H1 (cell line): ENCODE measurements at regions of chr11 and their contacts with region 1.

Region 1: GRCh38 chr11:34869426-34869825 is 46.8 kb downstream of the APIP start:
- DNase-seq: peak in 1 of 2 experiments; percentile 51
- H3K4me3 ChIP-seq: no peak overlapping the region
- H3K27ac ChIP-seq: no peak overlapping the region
- H3K4me1 ChIP-seq: no peaks in the 10 kb centered on the region
- H3K27me3 ChIP-seq: no peaks in the 10 kb centered on the region
- CTCF ChIP-seq: peak; percentile 35 to 73 (median 44)
- EP300 ChIP-seq: no peak
- POLR2A ChIP-seq: no peak
- RAD21 ChIP-seq: peak; percentile 35 to 50

Region 2: DNA sequence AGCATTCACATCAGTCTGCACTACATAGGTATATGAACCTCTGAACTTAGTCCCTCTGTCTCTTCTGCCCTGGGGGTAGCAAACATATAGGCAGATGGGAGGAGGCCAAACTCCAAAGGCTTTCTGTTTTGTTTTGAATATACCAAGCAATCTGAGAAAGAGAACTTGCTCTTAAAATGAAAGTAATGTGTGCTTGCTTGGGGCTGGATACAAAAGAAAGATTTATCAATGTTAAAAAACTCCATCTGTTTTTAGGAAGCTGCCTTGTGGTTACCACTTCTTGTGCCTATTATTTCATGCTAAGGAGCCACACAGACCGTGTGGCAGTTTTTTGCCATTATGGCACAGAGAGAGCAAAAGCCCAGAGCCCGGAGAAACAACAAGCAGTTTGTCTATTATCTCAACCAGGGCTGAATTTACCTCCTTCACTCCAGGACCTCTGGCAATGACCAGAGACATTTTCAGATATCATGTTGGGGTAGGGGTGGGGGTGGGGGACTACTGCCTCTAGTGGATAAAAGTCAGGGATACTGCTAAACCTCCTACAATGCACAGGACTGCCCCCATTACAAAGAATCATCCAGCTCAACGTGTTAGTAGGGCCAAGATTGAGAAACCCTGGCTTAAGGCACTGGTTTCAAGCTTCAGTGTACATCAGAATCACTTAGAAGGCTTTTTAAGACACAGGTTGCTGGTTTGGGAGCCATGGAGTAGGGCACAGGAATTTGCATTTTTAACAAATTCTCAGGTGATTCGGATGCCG is 77.5 kb before region 1 on chr11:
- CTCF ChIA-PET with region 1: interaction called, 10 read pairs
- POLR2A ChIA-PET with region 1: no interaction called
- DNase-seq: no peak
- H3K4me3 ChIP-seq: no peak overlapping the region
- H3K27ac ChIP-seq: no peak overlapping the region
- H3K4me1 ChIP-seq: peaks cover 0 to 5% (median 3%) of the 10 kb centered on the region in 4 experiments; a peak in 2 of 7 replicates
- H3K27me3 ChIP-seq: no peaks in the 10 kb centered on the region
- CTCF ChIP-seq: peak in 2 of 3 experiments; percentile 4 to 21; a peak in 1 of 4 replicates
- EP300 ChIP-seq: no peak
- POLR2A ChIP-seq: no peak
- RAD21 ChIP-seq: peak in 1 of 2 experiments; percentile 1; a peak in 1 of 4 replicates

Region 3: GRCh38 chr11:34846467-34846866 is 23.0 kb before region 1 on chr11:
- CTCF ChIA-PET with region 1: interaction called, 19 read pairs
- POLR2A ChIA-PET with region 1: no interaction called
- DNase-seq: no peak
- H3K4me3 ChIP-seq: no peak overlapping the region
- H3K27ac ChIP-seq: no peak overlapping the region
- H3K4me1 ChIP-seq: no peaks in the 10 kb centered on the region
- H3K27me3 ChIP-seq: no peaks in the 10 kb centered on the region
- CTCF ChIP-seq: no peak
- EP300 ChIP-seq: no peak
- POLR2A ChIP-seq: no peak
- RAD21 ChIP-seq: no peak

Region 4: DNA sequence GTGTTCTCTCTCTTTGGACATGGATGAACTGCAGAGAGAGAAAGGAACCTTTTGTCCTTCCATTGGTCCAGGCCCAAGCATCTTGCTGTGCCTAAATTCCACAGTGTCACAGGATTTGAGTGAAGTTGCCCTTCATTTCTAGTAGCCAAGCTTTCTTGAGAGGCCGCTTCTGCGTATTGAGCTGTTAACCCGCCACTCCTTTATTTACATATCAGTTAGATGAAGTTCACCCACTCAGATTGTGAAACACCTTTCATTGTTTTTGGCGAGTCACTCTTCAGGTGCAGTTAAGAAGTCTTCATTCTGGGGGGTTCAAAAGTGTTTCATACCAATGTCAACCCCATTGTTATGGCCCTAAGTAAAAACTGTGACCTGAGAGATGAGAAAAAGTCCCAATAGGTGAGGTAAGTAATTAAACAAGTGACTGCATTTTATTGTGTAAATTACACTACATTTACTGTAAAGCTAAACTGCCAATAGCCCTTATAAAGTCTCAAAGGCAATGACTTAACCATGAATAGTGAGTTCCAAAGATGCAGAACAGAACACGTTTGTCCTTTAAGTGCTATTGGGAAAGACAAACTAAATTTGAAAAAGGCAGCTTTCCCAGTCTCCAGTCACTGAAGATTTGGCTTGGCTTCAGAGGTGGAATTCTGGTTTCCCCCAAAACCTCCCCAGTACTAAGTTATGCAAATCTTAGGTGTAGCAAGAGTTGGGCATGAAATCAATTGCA is 14.2 kb before region 1 on chr11:
- CTCF ChIA-PET with region 1: interaction called, 21 read pairs
- POLR2A ChIA-PET with region 1: no interaction called
- DNase-seq: peak in 1 of 2 experiments; percentile 19
- H3K4me3 ChIP-seq: no peak overlapping the region
- H3K27ac ChIP-seq: no peak overlapping the region
- H3K4me1 ChIP-seq: peaks cover 0 to 3% (median 0%) of the 10 kb centered on the region in 4 experiments; a peak in 2 of 7 replicates
- H3K27me3 ChIP-seq: no peaks in the 10 kb centered on the region
- CTCF ChIP-seq: no peak
- EP300 ChIP-seq: no peak
- POLR2A ChIP-seq: no peak
- RAD21 ChIP-seq: no peak

Region 5: GRCh38 chr11:34890812-34891211 is 21.4 kb after region 1 on chr11:
- CTCF ChIA-PET with region 1: interaction called, 25 read pairs
- POLR2A ChIA-PET with region 1: no interaction called
- DNase-seq: no peak
- H3K4me3 ChIP-seq: no peak overlapping the region
- H3K27ac ChIP-seq: no peak overlapping the region
- H3K4me1 ChIP-seq: no peaks in the 10 kb centered on the region
- H3K27me3 ChIP-seq: no peaks in the 10 kb centered on the region
- CTCF ChIP-seq: peak in 1 of 3 experiments; percentile 29; a peak in 2 of 4 replicates
- EP300 ChIP-seq: no peak
- POLR2A ChIP-seq: no peak
- RAD21 ChIP-seq: peak; percentile 44 to 54